ENCODE measurements at regions of chr21 and their contacts with region 1.

Region 1: DNA sequence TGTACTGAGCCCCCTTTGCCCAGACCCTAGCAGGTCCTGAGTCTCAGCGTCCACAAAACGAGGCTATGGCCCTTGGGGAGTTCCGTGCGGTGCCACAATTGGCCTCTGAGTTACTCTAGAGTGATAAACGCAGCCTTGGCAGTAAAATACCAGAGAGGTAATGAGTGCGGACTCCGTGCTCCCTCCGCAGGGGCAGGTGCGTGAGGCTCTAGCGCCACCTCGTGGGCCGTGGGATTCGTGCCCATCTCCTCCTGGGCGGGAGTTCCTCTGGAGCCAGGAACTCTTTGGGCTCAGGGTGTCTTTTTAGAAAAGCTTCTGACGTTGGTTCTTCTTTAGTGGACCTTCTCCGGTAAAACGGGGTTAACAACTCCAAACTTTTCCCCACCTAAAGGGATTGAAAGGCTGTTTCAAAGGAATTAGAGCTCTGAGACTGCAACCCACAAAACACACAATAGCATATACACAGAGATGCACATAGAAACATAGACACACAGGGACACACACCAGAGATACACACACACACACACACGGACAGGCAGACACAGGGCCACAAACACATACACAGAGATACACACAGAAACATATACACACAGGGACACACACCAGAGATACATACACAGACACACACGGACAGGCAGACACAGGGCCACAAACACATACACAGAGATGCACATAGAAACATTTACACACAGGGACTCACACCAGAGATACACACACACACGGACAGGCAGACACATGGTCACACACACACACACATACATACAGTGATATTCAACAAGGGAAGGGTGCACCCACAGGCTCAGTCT is 99.4 kb downstream of the KCNJ15 start:
- DNase-seq: no peak
- H3K4me3 ChIP-seq: no peak overlapping the region
- CTCF ChIP-seq: peak; percentile 98

Region 2: GRCh38 chr21:37675202-37675801 is 680.9 kb before region 1 on chr21:
- CTCF ChIA-PET with region 1: interaction called, 22 read pairs
- POLR2A ChIA-PET with region 1: no interaction called
- DNase-seq: no peak
- H3K4me3 ChIP-seq: no peak overlapping the region
- CTCF ChIP-seq: peak; percentile 89

Region 3: DNA sequence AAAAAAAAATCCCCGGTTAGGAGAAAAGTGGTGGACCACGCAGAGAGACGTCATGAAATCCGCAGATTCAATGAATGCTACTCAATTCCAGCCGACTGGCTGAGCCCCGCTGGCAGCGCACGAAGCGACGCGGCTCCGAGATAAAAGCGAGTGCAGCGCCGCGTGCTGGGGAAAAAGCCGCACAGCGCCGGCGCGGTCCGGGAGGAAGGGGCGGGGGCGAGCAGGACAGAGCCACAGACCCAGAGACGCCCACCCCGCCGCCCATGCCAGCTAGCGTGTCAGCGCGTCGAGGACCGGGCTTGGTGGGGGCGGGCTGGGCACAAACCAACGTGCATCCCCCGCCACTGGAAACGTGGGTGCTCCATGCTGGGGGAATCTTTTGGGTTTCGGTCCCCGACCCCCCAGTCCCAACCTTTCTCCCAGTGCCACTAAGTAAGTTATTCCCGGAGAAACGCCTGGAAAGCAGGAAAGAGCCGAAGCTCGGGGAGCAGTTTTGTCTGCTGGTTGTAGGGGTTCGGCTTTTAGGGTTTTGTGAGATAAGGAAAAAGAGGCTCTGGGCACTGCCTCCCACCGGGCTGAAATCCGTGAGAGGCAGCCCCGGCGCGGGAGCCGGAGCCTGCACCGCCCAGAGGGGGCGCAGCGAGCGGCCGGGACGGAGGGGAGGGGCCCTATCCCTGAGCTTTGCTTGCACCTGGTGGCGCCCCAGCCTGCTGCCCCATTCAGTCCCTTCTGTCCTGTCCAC is 439.7 kb before region 1 on chr21 and contains the start of gene KCNJ6:
- CTCF ChIA-PET with region 1: interaction called, 12 read pairs
- POLR2A ChIA-PET with region 1: no interaction called
- DNase-seq: no peak
- H3K4me3 ChIP-seq: peak within 1 kb of the TSS; percentile 32
- CTCF ChIP-seq: peak; percentile 89

Region 4: GRCh38 chr21:38151021-38151645 is 205.1 kb before region 1 on chr21:
- CTCF ChIA-PET with region 1: interaction called, 124 read pairs
- POLR2A ChIA-PET with region 1: no interaction called
- DNase-seq: no peak
- H3K4me3 ChIP-seq: no peak overlapping the region
- CTCF ChIP-seq: no peak

Region 5: DNA sequence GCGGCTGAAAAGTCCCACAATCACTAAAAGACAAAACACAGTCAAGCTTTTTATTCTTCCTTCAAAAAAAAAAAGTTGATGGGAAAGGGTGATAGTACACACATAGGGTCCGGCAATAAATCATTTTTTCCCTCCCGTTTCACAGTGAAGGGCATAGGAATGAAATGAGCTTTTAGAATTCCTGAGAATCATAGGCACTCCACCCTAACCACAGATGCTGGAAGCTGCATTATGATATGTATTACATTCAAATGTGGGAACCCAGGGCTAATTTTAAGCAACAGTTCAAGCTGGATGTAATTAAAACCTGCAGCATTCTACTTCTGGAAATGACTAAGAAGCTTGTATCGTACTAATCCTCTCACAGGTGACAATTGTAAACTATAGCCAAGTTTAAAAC is 175.1 kb before region 1 on chr21:
- CTCF ChIA-PET with region 1: interaction called, 459 read pairs
- POLR2A ChIA-PET with region 1: interaction called, 8 read pairs
- DNase-seq: no peak
- H3K4me3 ChIP-seq: no peak overlapping the region
- CTCF ChIP-seq: no peak

Region 6: DNA sequence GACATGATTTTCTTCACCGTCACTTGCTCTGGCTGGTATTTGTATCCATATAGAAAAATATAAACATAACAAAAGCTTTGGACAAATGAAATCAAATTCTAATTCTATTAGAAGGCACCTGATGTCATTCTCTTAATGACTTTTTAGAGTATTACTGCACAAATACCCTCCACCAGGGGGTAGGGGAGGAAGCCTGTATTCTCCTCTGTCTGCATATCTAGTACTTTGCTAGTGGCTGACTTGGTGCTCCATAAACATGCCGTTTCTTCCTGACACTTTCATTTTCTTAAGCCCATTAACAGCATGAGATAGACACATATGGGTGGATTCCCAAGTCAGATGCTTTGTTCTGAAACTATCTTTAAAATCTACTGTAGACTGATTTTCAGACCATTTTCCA is 120.0 kb before region 1 on chr21:
- CTCF ChIA-PET with region 1: interaction called, 37 read pairs
- POLR2A ChIA-PET with region 1: no interaction called
- DNase-seq: no peak
- H3K4me3 ChIP-seq: no peak overlapping the region
- CTCF ChIP-seq: peak; percentile 13

Region 7: DNA sequence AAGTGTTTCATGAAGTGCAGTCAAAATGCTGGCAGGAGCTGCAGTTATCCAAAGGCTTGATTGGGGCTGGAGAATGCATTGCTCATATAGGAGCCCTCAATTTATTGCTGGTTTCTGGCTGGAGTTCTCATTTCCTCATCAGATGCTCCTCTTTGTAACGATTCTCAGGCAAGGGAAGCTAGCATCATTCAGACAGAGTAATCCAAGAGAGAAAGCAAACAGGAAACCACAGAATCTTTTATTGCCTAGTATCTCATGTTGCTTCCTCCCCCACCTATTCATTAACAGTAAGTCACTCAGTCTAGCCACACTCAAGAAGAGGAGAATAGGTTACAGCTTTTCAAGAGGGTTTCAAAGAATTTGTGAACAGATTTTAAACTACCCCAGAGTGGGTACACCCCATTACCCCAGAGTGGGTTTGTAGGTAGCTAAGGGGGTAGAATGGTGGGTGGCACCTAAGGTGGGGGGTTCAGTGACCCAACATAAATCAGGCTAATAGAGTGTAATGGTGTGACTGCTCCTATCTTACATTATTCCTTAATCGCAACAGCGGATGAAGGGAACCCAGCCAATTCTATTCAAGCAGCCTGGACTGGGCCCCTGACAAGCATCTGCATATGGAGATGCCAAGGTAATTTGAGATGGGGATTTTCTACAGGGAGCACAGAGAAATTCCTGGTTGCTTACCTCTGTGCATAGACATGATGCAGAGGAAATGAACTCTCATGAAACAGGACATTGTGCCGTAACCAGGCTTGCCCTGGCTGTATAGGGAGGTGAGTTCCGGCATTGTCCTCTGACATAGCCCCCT is 32.3 kb before region 1 on chr21:
- CTCF ChIA-PET with region 1: interaction called, 18 read pairs
- POLR2A ChIA-PET with region 1: interaction called, 11 read pairs
- DNase-seq: peak; percentile 92
- H3K4me3 ChIP-seq: no peak overlapping the region
- CTCF ChIP-seq: no peak